Activated CD4-positive, alpha-beta T cell treated with anti-CD3 and anti-CD28 coated beads, Interleukin-2, amount 10 ng/mL, durations not matched to agents 24 days and 14 days (primary cell): ENCODE measurements at regions of chr9 and their contacts with region 1.

Region 1: GRCh38 chr9:129962889-129963703 is 79.9 kb downstream of the FNBP1 start:
- DNase-seq: peak; percentile 93
- H3K4me3 Mint-ChIP-seq: peak overlapping the region; percentile 84
- H3K27ac Mint-ChIP-seq: peak overlapping the region; percentile 94
- H3K4me1 Mint-ChIP-seq: peaks cover 68% of the 10 kb centered on the region
- H3K27me3 Mint-ChIP-seq: no peaks in the 10 kb centered on the region

Region 2: GRCh38 chr9:129783516-129784361 is 179.4 kb before region 1 on chr9:
- intact Hi-C with region 1: no loop called
- DNase-seq: peak; percentile 94
- H3K4me3 Mint-ChIP-seq: no peak overlapping the region
- H3K27ac Mint-ChIP-seq: no peak overlapping the region
- H3K4me1 Mint-ChIP-seq: peaks cover 4% of the 10 kb centered on the region
- H3K27me3 Mint-ChIP-seq: peaks cover 24% of the 10 kb centered on the region

Region 3: DNA sequence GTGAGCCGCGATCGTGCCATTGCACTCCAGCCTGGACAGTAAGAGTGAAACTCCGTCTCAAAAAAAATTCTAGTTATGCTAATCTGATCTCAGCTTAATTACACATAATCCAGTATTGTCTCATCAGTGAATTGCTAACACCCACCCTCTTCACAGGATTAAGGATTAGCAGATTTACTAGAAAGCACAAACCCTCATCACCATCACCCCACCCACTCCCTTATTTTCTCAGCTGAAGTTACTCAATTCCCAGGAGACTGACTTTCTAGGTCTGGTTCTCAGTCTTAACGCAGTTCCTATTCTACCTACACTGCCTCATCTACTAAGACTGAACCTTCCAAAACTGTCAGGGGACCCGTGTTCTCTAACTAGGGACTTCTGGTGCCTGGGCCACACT is 151.1 kb before region 1 on chr9:
- intact Hi-C with region 1: no loop called
- DNase-seq: no peak
- H3K4me3 Mint-ChIP-seq: no peak overlapping the region
- H3K27ac Mint-ChIP-seq: no peak overlapping the region
- H3K4me1 Mint-ChIP-seq: peaks cover 4% of the 10 kb centered on the region
- H3K27me3 Mint-ChIP-seq: no peaks in the 10 kb centered on the region

Region 4: DNA sequence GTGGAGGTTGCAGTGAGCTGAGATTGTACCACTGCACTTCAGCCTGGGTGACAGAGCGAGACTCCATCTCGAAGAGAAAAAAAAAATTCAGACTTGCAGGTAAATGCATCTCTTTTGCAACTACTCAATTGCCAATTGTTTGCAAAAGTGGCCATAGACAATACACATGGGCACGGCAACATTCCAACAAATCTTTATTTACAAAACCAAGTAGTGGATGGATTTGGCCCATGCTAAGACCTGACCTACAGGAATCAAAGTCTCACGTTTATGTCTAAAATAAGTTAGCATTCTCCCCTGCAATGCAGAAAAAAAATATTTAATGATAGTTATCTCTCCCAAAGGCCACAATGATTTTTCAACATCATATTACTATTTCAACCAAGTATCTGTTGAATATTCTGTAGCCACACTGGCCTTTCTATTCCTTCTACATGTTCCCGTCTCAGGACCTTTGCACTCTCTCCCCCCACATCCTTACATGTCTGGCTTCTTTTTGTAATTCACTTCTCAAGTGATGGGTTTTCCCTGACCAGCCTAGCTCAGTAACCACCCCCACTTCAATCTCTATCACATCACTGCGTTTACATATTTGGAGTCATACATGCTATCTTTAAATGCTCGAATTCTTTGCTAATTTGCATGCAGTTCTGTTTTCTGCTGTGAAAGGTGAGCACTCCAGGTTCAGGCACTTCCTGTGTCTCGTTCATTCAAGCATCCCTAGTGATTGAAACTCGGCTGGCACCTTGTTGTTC is 25.7 kb after region 1 on chr9:
- intact Hi-C with region 1: loop called (anchors 2 kb)
- DNase-seq: peak; percentile 66
- H3K4me3 Mint-ChIP-seq: peak overlapping the region; percentile 31
- H3K27ac Mint-ChIP-seq: peak overlapping the region; percentile 92
- H3K4me1 Mint-ChIP-seq: peaks cover 49% of the 10 kb centered on the region
- H3K27me3 Mint-ChIP-seq: no peaks in the 10 kb centered on the region